ENCODE measurements at regions of chr5 and their contacts with region 1.

Region 1: DNA sequence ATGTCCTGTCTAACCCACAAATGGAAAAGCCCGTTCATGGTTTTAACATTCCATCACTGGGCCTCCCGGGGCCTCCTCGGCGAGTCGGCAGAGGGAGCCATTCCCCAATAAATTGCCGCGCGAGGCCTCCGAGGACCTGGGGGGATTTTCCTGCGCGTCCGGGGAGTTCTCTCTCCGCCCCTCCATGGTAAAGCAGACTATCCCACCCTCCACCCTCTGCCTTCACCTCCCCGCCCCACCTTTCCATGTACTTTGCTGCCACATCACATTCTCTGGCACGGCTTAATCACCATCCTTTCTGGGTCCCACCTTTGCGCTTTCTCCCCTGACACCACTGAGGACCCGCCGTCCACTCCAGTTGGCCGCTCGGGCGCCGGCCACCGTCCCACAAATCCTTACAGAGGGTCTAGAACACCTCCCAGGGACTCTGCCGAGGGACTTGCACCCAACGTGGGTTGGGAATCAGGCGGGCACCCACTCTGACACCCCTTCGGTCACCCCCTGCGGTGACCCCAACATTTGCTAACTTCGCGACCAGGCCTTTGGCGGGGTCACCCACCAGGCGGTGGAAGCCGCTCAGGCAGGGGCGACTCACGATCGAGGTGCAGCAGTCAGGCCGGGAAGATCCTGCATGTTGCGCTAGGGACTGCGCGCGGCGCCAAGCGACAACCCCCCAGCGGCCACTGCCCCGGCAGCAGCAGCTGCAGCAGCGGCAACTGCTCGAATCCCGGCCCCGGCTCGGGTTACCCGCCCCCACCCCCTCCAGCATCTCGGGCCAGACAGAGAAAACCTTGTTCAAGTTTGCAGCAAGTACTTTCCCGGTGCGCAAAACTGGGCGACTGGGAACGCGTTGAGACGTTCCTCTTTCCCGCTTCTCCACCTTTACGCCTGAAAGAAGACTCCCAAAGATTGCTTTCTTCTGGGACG is at the start of gene MEGF10:
- DNase-seq: peak; percentile 62
- ATAC-seq: peak; percentile 51
- H3K4me3 Mint-ChIP-seq: peak within 1 kb of the TSS; percentile 7
- H3K27ac Mint-ChIP-seq: no peak within 1 kb of the TSS
- H3K4me1 Mint-ChIP-seq: peaks cover 13% of the 10 kb centered on the region
- H3K27me3 Mint-ChIP-seq: peaks cover 64% of the 10 kb centered on the region
- total RNA-seq, gene MEGF10: not detected

Region 2: GRCh38 chr5:127335381-127335780 is 45.1 kb after region 1 on chr5:
- CTCF ChIA-PET with region 1: no interaction called
- POLR2A ChIA-PET with region 1: no interaction called
- intact Hi-C with region 1: no loop called
- DNase-seq: no peak
- ATAC-seq: no peak
- H3K4me3 Mint-ChIP-seq: no peak overlapping the region
- H3K27ac Mint-ChIP-seq: no peak overlapping the region
- H3K4me1 Mint-ChIP-seq: no peaks in the 10 kb centered on the region
- H3K27me3 Mint-ChIP-seq: peaks cover 22% of the 10 kb centered on the region

Region 3: GRCh38 chr5:127441799-127442484 is 151.7 kb after region 1 on chr5:
- CTCF ChIA-PET with region 1: interaction called, 3 read pairs
- POLR2A ChIA-PET with region 1: no interaction called
- intact Hi-C with region 1: loop called in 1 of 2 experiments (anchors 2 kb)
- DNase-seq: no peak
- ATAC-seq: no peak
- H3K4me3 Mint-ChIP-seq: no peak overlapping the region
- H3K27ac Mint-ChIP-seq: no peak overlapping the region
- H3K4me1 Mint-ChIP-seq: no peaks in the 10 kb centered on the region
- H3K27me3 Mint-ChIP-seq: peaks cover 5% of the 10 kb centered on the region